ENCODE measurements at regions of chr17 and their contacts with region 1.

Region 1: GRCh38 chr17:27381007-27381501 is 75.2 kb upstream of the KSR1 start:
- DNase-seq: peak; percentile 69
- H3K4me3 ChIP-seq: no peak overlapping the region
- H3K27ac ChIP-seq: no peak overlapping the region
- H3K4me1 ChIP-seq: peaks cover 14% of the 10 kb centered on the region
- H3K27me3 ChIP-seq: no peaks in the 10 kb centered on the region
- CTCF ChIP-seq: peak; percentile 88

Region 2: DNA sequence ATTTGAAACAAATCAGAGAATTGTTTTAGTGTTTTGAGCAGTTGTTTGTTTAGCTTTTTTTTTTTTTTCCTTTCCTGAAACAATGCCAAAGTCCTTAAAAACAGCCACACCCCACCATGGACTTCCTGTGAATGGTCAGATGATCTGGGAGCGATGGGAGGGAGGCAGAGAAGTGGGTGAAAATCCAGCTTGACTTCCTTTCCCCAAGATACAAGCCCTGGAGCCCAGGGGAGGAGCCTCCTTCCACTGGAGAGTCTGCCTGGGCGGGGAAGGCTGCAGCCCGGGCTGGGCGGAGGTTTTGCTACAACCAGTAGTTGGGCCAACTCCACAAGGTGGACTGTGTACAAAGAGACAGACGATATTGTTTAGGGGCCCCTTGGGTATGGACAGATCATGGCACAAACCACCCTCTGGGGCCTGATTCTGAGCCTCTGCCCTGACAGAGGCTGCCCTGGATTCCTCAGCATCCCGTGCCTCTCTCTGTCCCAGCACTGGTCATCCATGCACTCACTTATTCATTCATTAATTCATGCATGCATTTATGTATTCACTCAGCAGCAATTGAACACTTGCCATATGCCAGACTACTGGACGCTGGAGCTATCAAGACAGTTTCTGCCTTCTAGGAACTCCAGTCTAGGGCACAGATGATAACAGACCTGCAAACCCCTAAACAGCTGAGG is 57.4 kb before region 1 on chr17:
- CTCF ChIA-PET with region 1: no interaction called
- POLR2A ChIA-PET with region 1: no interaction called
- intact Hi-C with region 1: no loop called
- DNase-seq: no peak
- H3K4me3 ChIP-seq: no peak overlapping the region
- H3K27ac ChIP-seq: no peak overlapping the region
- H3K4me1 ChIP-seq: no peaks in the 10 kb centered on the region
- H3K27me3 ChIP-seq: no peaks in the 10 kb centered on the region
- CTCF ChIP-seq: no peak

Region 3: DNA sequence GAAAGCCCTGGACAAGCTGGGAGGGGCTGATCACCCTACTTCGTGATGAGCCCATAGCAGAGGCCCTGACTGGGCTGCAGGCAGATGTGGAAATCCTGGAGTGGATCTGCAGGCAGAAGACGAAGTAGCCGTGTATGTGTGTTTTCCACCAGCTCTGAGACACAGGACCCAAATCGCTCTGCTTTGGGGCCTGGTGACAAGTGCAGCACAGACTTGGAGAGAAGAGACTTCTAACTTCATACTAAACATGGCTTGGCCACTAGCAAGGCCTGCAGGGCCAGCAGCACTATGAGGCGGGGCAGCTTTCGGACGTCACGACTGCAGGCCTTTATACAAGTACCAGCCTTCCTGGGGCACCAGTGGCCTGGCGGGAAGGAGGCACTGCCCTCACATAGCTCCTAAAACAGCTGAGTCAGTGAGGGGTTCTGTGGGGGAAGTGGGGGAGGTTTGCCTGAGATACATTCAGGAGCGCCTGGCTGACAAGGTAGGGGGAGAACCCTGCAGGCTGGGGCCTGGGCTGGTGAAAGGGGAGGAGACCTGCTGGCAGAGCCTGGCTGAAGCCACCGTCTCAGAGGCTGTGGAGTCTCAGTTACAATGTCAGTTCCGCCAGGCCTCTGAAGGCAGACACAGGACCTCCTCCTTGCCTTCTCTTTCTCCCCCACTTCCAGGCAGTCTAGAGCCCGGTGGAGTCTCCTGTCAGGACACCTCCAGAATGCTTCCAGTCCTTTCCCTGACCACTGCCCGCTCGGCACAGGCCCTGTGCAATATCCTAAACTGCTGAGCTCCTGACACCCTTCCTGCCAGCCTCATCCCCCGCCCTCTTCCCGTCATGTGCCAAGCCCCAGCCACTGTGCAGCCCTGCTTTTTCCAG is 13.7 kb before region 1 on chr17:
- CTCF ChIA-PET with region 1: interaction called, 15 read pairs
- POLR2A ChIA-PET with region 1: no interaction called
- intact Hi-C with region 1: no loop called
- DNase-seq: no peak
- H3K4me3 ChIP-seq: no peak overlapping the region
- H3K27ac ChIP-seq: no peak overlapping the region
- H3K4me1 ChIP-seq: no peaks in the 10 kb centered on the region
- H3K27me3 ChIP-seq: no peaks in the 10 kb centered on the region
- CTCF ChIP-seq: no peak

Region 4: GRCh38 chr17:27455914-27456680 is 75.0 kb after region 1 on chr17 and contains the start of gene KSR1:
- CTCF ChIA-PET with region 1: no interaction called
- POLR2A ChIA-PET with region 1: no interaction called
- intact Hi-C with region 1: no loop called
- DNase-seq: peak; percentile 86
- H3K4me3 ChIP-seq: peak within 1 kb of the TSS; percentile 91
- H3K27ac ChIP-seq: peak within 1 kb of the TSS; percentile 64
- H3K4me1 ChIP-seq: peaks cover 19% of the 10 kb centered on the region
- H3K27me3 ChIP-seq: no peaks in the 10 kb centered on the region
- CTCF ChIP-seq: peak; percentile 79
- total RNA-seq, gene KSR1: 41.7 and 47.8 TPM in 2 replicates